ENCODE measurements at regions of chr15 and their contacts with region 1.

Region 1: DNA sequence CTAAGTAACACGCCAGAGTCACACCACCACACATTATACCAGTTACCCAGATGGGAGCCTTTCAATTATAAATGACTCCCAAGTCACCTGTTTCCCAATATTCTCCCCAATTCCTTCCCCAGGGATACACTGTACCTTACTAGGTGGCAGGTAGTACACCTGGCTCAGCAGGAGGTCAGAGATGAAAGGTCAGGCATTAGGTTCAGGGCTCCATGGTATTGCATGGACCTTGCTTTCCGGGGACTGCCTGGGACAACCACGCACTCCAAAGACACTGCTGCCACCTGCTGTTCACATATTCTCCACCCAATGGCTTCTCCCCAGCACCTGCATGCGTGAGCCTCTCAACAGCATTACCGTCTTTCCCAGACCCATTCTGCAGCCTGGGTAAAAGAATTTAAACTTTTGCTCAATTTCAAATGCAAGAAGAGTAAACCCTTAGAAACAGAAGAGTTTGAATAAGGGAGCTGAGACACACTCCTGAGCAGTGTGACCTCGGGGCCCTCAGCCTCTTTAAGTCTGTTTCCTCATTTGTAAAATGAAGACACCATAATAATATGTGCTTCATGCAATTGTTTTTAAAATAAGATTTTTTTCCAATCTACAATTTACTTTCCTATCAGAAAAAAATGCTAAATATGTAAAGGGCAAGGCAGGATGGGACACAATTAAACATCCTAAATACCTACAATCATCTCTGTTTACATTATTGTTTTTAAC is 28.0 kb upstream of the LACTB start:
- DNase-seq: peak; percentile 80
- ATAC-seq: peak; percentile 59
- H3K4me3 ChIP-seq: no peak overlapping the region
- H3K27ac ChIP-seq: peak overlapping the region; percentile 4
- H3K4me1 ChIP-seq: peaks cover 12% of the 10 kb centered on the region
- H3K27me3 ChIP-seq: no peaks in the 10 kb centered on the region
- CTCF ChIP-seq: peak; percentile 82
- POLR2A ChIP-seq: peak; percentile 40; the same call in 1 of the 2 replicates
- RAD21 ChIP-seq: peak; percentile 95

Region 2: GRCh38 chr15:62847900-62848489 is 245.7 kb before region 1 on chr15:
- CTCF ChIA-PET with region 1: interaction called, 4 read pairs
- POLR2A ChIA-PET with region 1: no interaction called
- dilution Hi-C with region 1: no loop called
- in situ Hi-C with region 1: no loop called
- intact Hi-C with region 1: loop called (anchors 5 kb)
- DNase-seq: peak; percentile 54
- ATAC-seq: no peak
- H3K4me3 ChIP-seq: no peak overlapping the region
- H3K27ac ChIP-seq: no peak overlapping the region
- H3K4me1 ChIP-seq: peaks cover 18% of the 10 kb centered on the region
- H3K27me3 ChIP-seq: no peaks in the 10 kb centered on the region
- CTCF ChIP-seq: peak; percentile 60
- POLR2A ChIP-seq: no peak
- RAD21 ChIP-seq: peak; percentile 75

Region 3: DNA sequence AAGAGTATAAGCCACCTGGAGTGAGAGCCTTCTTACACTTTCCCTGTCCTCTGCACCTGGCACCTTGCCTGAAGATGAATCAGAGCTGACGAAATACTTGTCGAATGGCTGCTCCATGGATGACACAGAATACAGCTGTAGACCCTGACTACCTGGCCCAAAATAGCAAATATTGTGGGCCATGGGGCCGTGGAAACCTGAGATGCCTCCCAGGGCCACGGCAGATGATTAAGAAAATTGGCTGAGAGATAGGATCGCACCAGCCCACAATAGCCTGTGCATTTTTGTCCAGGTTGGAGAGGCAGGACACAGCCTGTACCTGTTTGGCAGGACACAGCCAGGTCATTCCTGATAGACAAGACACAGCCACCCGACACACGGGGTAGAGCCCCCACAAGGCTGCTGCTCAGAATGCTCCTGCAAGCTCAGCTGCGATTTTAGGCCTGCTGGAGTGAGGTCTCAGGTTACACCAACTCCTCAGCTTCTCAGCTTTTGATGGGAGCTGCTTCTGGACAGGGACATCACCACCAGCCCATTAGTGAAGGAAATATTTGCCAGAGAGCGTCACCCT is 74.0 kb before region 1 on chr15:
- CTCF ChIA-PET with region 1: no interaction called
- POLR2A ChIA-PET with region 1: no interaction called
- dilution Hi-C with region 1: no loop called
- in situ Hi-C with region 1: no loop called
- intact Hi-C with region 1: no loop called
- DNase-seq: peak; percentile 95
- ATAC-seq: peak; percentile 52
- H3K4me3 ChIP-seq: no peak overlapping the region
- H3K27ac ChIP-seq: no peak overlapping the region
- H3K4me1 ChIP-seq: peaks cover 32% of the 10 kb centered on the region
- H3K27me3 ChIP-seq: no peaks in the 10 kb centered on the region
- CTCF ChIP-seq: no peak
- POLR2A ChIP-seq: no peak
- RAD21 ChIP-seq: no peak

Region 4: GRCh38 chr15:63070681-63071129 is 22.9 kb before region 1 on chr15:
- CTCF ChIA-PET with region 1: interaction called, 3 read pairs
- POLR2A ChIA-PET with region 1: no interaction called
- dilution Hi-C with region 1: no loop called
- in situ Hi-C with region 1: no loop called
- intact Hi-C with region 1: loop called (anchors 2 kb)
- DNase-seq: no peak
- ATAC-seq: no peak
- H3K4me3 ChIP-seq: no peak overlapping the region
- H3K27ac ChIP-seq: no peak overlapping the region
- H3K4me1 ChIP-seq: peaks cover 13% of the 10 kb centered on the region
- H3K27me3 ChIP-seq: no peaks in the 10 kb centered on the region
- CTCF ChIP-seq: no peak
- POLR2A ChIP-seq: peak; percentile 2; the same call in 1 of the 2 replicates
- RAD21 ChIP-seq: no peak

Region 5: GRCh38 chr15:63157118-63157843 is 63.6 kb after region 1 on chr15 and contains the start of gene RPS27L:
- CTCF ChIA-PET with region 1: no interaction called
- POLR2A ChIA-PET with region 1: interaction called, 4 read pairs
- dilution Hi-C with region 1: no loop called
- in situ Hi-C with region 1: no loop called
- intact Hi-C with region 1: loop called (anchors 2 kb)
- DNase-seq: peak; percentile 95
- ATAC-seq: peak; percentile 95
- H3K4me3 ChIP-seq: peak within 1 kb of the TSS; percentile 97
- H3K27ac ChIP-seq: peak within 1 kb of the TSS; percentile 95
- H3K4me1 ChIP-seq: peaks cover 2% of the 10 kb centered on the region
- H3K27me3 ChIP-seq: no peaks in the 10 kb centered on the region
- CTCF ChIP-seq: no peak
- POLR2A ChIP-seq: peak; percentile 93
- RAD21 ChIP-seq: no peak; the same call in 1 of the 2 replicates
- total RNA-seq, gene RPS27L: 53.1 and 64.7 TPM in 2 replicates

Region 6: GRCh38 chr15:63203451-63204090 is 109.9 kb after region 1 on chr15:
- CTCF ChIA-PET with region 1: no interaction called
- POLR2A ChIA-PET with region 1: no interaction called
- dilution Hi-C with region 1: no loop called
- in situ Hi-C with region 1: no loop called
- intact Hi-C with region 1: no loop called
- DNase-seq: peak; percentile 76
- ATAC-seq: peak; percentile 66
- H3K4me3 ChIP-seq: no peak overlapping the region
- H3K27ac ChIP-seq: no peak overlapping the region
- H3K4me1 ChIP-seq: peaks cover 6% of the 10 kb centered on the region
- H3K27me3 ChIP-seq: no peaks in the 10 kb centered on the region
- CTCF ChIP-seq: no peak
- POLR2A ChIP-seq: no peak
- RAD21 ChIP-seq: no peak

Measured in IMR-90 (cell line).